ENCODE measurements at regions of chr14 and their contacts with region 1.

Region 1: GRCh38 chr14:103104654-103105452 is 10.3 kb downstream of the EXOC3L4 start:
- DNase-seq: peak; percentile 72 to 81 (median 76)
- ATAC-seq: peak; percentile 78
- H3K4me3 ChIP-seq: no peak overlapping the region
- H3K27ac ChIP-seq: no peak overlapping the region
- H3K4me1 ChIP-seq: peaks cover 35% of the 10 kb centered on the region
- H3K27me3 ChIP-seq: no peaks in the 10 kb centered on the region
- CTCF ChIP-seq: peak; percentile 94 to 99 (median 98)
- POLR2A ChIP-seq: no peak

Region 2: DNA sequence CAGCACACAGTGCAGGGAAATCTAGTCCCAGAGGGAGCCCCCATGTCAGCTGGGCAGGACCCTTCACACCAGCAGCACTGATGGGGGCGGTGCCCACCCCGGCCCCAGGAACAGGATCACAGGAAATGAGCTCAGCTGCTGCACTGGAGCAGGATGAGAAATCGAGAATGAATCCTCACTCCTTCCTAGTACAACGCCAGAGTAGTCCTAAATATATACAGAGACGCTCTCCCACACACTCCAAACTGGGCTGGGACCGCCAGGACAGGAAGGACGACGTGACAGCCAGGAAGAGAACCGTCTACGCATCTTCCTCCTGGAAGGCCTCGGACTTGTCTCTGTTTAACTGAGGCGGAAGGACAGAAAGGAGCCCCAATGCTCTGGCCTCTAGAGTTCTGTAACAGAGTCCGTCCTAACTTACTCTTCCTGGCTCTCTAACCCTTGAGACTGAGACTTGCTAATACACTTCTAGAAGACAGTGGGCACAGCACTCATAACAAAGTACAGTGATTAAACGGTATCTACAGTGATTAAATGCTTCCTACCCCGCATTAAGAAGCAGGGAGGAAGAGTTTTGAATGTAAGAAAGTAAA is 80.9 kb before region 1 on chr14:
- intact Hi-C with region 1: no loop called
- DNase-seq: no peak
- ATAC-seq: no peak
- H3K4me3 ChIP-seq: no peak overlapping the region
- H3K27ac ChIP-seq: peak overlapping the region in 2 of 4 donors; percentile 23 to 50
- H3K4me1 ChIP-seq: peaks cover 13% of the 10 kb centered on the region
- H3K27me3 ChIP-seq: no peaks in the 10 kb centered on the region
- CTCF ChIP-seq: no peak
- POLR2A ChIP-seq: no peak

Region 3: GRCh38 chr14:103179094-103179493 is 74.2 kb after region 1 on chr14:
- intact Hi-C with region 1: loop called (anchors 5 kb)
- DNase-seq: no peak
- ATAC-seq: no peak
- H3K4me3 ChIP-seq: no peak overlapping the region
- H3K27ac ChIP-seq: no peak overlapping the region
- H3K4me1 ChIP-seq: no peaks in the 10 kb centered on the region
- H3K27me3 ChIP-seq: no peaks in the 10 kb centered on the region
- CTCF ChIP-seq: no peak
- POLR2A ChIP-seq: no peak

Region 4: GRCh38 chr14:103292426-103293374 is 187.8 kb after region 1 on chr14:
- intact Hi-C with region 1: loop called (anchors 10 kb)
- DNase-seq: peak; percentile 75 to 85 (median 80)
- ATAC-seq: peak; percentile 85
- H3K4me3 ChIP-seq: no peak overlapping the region
- H3K27ac ChIP-seq: no peak overlapping the region
- H3K4me1 ChIP-seq: no peaks in the 10 kb centered on the region
- H3K27me3 ChIP-seq: no peaks in the 10 kb centered on the region
- CTCF ChIP-seq: peak; percentile 82 to 92 (median 88)
- POLR2A ChIP-seq: no peak